ENCODE measurements at regions of chr2 and their contacts with region 1.

Region 1: DNA sequence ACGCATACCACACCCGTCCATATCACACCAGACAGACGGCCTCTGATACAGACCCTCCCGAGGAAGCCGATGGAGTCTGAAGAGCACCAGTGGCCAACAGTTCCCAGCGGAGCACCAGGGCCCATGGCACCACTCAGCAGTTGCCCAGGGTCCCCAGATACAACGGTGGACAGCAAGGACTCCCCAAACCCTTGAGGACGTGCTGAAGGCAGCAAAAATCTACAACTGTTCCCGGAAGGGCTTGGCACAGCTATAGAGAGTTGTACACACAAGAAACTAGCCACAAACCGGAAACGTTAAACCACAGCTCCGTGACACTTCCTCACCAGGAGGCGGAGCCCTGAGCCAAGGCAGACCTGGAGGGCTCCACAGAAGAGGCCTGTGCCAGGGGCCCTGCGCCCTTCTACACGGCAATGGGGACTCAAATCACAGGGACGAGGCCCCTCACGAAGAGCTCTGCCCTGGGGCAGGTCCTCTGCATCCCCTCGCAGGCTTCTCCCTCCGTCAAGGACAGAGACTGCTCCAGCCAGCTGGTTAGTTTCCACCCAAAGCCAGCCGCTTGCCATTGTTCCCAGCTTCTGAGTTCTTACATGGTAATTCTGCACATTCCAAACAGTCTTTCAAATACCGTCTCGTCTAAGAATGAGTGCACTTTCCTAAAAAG is 133.4 kb downstream of the HDAC4 start:
- DNase-seq: peak; percentile 93 to 96 (median 94)
- H3K4me3 ChIP-seq: peak overlapping the region; percentile 64 to 79
- H3K4me3 Mint-ChIP-seq: peak overlapping the region; percentile 95 to 98 (median 97)
- H3K27ac ChIP-seq: peak overlapping the region; percentile 81
- H3K27ac Mint-ChIP-seq: peak overlapping the region; percentile 95 to 100 (median 98)
- H3K4me1 ChIP-seq: peaks cover 75% of the 10 kb centered on the region
- H3K4me1 Mint-ChIP-seq: peaks cover 46 to 87% (median 68%) of the 10 kb centered on the region in 4 donors
- H3K27me3 ChIP-seq: no peaks in the 10 kb centered on the region
- H3K27me3 Mint-ChIP-seq: no peaks in the 10 kb centered on the region

Region 2: DNA sequence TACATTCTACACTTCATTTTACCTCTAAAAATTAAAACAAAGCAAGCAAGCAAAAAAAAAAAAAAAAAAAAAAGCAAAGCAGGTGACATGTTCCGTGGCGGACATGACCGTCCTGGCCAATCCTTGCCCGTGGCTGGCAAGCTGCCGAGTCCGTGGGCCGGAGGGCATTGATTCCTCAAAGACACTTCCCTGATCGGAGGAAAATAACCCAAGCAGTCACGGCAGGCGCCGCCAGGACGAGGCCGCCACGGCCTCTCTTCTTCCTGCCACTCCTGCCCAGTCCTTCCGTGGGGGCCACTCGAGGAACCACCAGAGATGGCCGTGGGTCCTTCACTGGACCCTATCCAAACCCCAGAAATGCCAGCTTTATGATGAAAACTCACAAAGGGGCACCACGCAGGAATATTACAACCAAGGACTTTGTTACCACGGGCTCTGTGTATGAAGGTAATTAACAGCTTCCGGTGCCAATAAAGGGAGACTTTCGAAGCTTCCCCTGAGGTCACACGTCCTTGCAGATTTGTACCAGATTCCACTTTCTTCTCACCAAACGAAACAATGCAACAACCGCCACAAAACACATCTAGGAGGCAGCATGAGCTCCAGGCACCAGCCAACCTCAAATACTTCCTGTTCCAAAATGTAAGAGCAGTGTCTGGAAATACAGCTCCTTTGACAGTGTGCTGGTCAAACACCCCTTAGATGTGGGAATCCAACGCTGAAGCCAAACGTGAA is 36.9 kb before region 1 on chr2:
- CTCF ChIA-PET with region 1: interaction called, 8 read pairs
- POLR2A ChIA-PET with region 1: interaction called, 11 read pairs
- intact Hi-C with region 1: loop called (anchors 2 kb)
- DNase-seq: peak; percentile 24 to 58 (median 44)
- H3K4me3 ChIP-seq: peak overlapping the region in 1 of 2 donors; percentile 3
- H3K4me3 Mint-ChIP-seq: peak overlapping the region; percentile 2 to 82 (median 67)
- H3K27ac ChIP-seq: peak overlapping the region; percentile 60
- H3K27ac Mint-ChIP-seq: peak overlapping the region; percentile 71 to 93 (median 85)
- H3K4me1 ChIP-seq: peaks cover 60% of the 10 kb centered on the region
- H3K4me1 Mint-ChIP-seq: peaks cover 43 to 87% (median 65%) of the 10 kb centered on the region in 4 donors
- H3K27me3 ChIP-seq: no peaks in the 10 kb centered on the region
- H3K27me3 Mint-ChIP-seq: no peaks in the 10 kb centered on the region

Region 3: DNA sequence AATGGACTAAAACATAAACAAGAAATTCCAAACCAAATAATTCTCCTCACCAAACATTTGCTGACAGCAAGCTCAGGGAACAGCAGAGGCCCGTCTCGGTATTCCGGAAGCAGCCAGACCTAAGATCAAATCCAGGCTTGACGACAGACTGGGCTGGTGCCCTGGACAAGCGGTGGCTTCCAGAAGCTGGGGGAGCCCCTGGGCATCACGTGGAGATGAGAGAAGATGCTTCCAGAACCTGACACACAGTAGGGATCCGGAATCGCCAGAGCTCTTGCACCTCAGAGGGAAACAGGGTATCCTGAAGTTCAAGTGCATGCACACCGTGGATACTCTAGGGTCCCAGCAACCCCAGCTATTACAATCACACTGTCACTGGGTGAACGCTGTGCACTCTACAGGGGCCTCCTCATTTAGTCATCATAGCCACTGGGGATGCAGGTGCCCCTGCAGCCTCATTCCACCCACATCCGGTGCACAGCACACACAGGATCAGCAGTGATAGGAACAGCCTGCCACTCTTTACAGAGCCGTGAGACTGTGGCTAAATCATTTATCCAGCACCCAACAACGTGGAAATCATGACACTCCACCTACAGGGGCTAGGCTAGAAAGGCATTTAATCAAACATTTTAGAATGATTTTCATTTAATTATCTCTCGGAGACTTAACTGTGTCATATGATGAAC is 30.8 kb after region 1 on chr2:
- CTCF ChIA-PET with region 1: interaction called, 196 read pairs
- POLR2A ChIA-PET with region 1: interaction called, 109 read pairs
- intact Hi-C with region 1: loop called (anchors 1 kb)
- DNase-seq: peak; percentile 75 to 94 (median 83)
- H3K4me3 ChIP-seq: peak overlapping the region; percentile 56 to 58
- H3K4me3 Mint-ChIP-seq: peak overlapping the region; percentile 86 to 92 (median 90)
- H3K27ac ChIP-seq: peak overlapping the region; percentile 64
- H3K27ac Mint-ChIP-seq: peak overlapping the region; percentile 92 to 98 (median 95)
- H3K4me1 ChIP-seq: peaks cover 61% of the 10 kb centered on the region
- H3K4me1 Mint-ChIP-seq: peaks cover 36 to 79% (median 57%) of the 10 kb centered on the region in 4 donors
- H3K27me3 ChIP-seq: no peaks in the 10 kb centered on the region
- H3K27me3 Mint-ChIP-seq: no peaks in the 10 kb centered on the region

Region 4: DNA sequence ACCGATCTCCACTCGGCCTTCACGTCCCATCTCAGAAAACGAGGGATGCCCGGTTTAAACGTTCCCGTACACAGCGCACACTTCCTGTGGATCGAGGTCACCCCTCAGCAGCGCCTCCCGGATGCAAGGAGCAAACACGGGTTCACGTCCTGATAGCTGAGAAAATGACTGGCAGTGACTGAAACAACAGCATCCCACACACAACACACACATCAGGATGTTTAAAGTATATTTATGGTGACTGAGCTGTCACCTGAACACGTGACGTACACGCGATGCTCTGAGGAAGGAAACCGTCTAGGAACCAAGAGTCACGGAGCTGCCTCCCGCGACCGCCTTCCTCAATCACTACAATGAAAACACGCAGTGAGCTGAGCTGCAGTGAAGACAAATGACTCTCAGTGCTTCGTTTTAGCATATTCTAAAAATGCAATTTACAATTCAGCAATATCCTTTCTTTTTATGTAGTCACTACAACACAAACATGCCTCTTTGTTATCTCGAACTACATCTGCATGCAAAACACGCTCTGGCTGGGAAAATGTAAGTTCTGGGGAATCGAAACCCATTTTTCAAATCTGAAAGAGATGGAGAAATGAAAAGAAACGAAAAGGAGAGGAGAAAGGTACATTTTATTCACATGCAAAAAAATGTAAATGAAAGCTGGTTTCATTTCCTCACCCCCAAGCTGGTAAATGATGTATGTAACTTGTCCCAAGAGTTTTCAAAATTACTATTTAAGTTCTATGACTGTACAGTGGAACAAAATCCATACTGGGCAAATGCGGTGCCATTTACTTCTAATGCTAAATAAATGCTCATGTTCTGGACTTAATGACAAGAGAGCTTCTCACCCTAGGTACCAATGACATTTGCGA is 113.7 kb after region 1 on chr2:
- CTCF ChIA-PET with region 1: interaction called, 20 read pairs
- POLR2A ChIA-PET with region 1: interaction called, 14 read pairs
- intact Hi-C with region 1: loop called (anchors 5 kb)
- DNase-seq: peak; percentile 68 to 87 (median 77)
- H3K4me3 ChIP-seq: peak overlapping the region; percentile 39 to 49
- H3K4me3 Mint-ChIP-seq: peak overlapping the region; percentile 83 to 94 (median 87)
- H3K27ac ChIP-seq: peak overlapping the region; percentile 62
- H3K27ac Mint-ChIP-seq: peak overlapping the region; percentile 90 to 99 (median 96)
- H3K4me1 ChIP-seq: peaks cover 21% of the 10 kb centered on the region
- H3K4me1 Mint-ChIP-seq: peaks cover 17 to 31% (median 19%) of the 10 kb centered on the region in 4 donors
- H3K27me3 ChIP-seq: no peaks in the 10 kb centered on the region
- H3K27me3 Mint-ChIP-seq: no peaks in the 10 kb centered on the region

Region 5: GRCh38 chr2:239482778-239483712 is 215.6 kb after region 1 on chr2:
- CTCF ChIA-PET with region 1: no interaction called
- POLR2A ChIA-PET with region 1: no interaction called
- intact Hi-C with region 1: no loop called
- DNase-seq: no peak
- H3K4me3 ChIP-seq: no peak overlapping the region
- H3K4me3 Mint-ChIP-seq: no peak overlapping the region
- H3K27ac ChIP-seq: no peak overlapping the region
- H3K27ac Mint-ChIP-seq: no peak overlapping the region
- H3K4me1 ChIP-seq: no peaks in the 10 kb centered on the region
- H3K4me1 Mint-ChIP-seq: no peaks in the 10 kb centered on the region
- H3K27me3 ChIP-seq: no peaks in the 10 kb centered on the region
- H3K27me3 Mint-ChIP-seq: peaks cover 0 to 1% of the 10 kb centered on the region in 2 donors

Region 6: GRCh38 chr2:239629926-239630617 is 362.7 kb after region 1 on chr2:
- CTCF ChIA-PET with region 1: no interaction called
- POLR2A ChIA-PET with region 1: interaction called, 3 read pairs
- intact Hi-C with region 1: loop called (anchors 10 kb)
- DNase-seq: no peak
- H3K4me3 ChIP-seq: no peak overlapping the region
- H3K4me3 Mint-ChIP-seq: no peak overlapping the region
- H3K27ac ChIP-seq: no peak overlapping the region
- H3K27ac Mint-ChIP-seq: peak overlapping the region in 5 of 7 donors; percentile 15 to 68 (median 18)
- H3K4me1 ChIP-seq: peaks cover 34% of the 10 kb centered on the region
- H3K4me1 Mint-ChIP-seq: peaks cover 21 to 47% (median 32%) of the 10 kb centered on the region in 4 donors
- H3K27me3 ChIP-seq: no peaks in the 10 kb centered on the region
- H3K27me3 Mint-ChIP-seq: no peaks in the 10 kb centered on the region

Region 7: DNA sequence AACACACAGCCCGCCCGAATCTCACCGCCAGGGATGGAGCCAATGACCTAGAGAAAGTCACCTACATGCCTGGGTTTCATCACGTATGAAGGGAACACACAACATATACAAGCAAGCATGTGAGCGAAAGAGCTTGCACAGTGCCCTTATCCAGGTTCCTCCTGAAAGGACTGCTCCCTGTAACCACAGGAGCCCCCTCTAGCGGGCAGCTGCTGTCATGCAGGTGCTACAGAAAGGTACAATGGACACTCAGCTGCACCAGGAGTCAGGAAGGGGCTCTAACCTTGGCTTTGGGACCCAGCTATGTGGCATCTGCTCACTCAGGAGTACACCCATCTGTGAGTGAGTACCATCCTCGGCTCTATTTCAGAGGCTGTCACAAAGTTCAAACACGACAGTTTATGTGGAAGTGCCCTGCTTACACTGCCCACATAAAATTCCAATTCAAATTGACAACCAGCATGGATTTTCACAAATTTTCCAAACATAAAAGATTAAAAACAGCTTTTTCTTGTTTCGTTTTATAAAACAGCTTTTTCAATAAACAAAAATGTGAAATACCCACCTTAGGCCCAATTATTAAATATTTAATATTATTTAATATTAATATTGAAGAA is 754.2 kb after region 1 on chr2:
- CTCF ChIA-PET with region 1: interaction called, 8 read pairs
- POLR2A ChIA-PET with region 1: interaction called, 4 read pairs
- intact Hi-C with region 1: loop called (anchors 5 kb)
- DNase-seq: peak; percentile 42 to 73 (median 51)
- H3K4me3 ChIP-seq: no peak overlapping the region
- H3K4me3 Mint-ChIP-seq: no peak overlapping the region
- H3K27ac ChIP-seq: no peak overlapping the region
- H3K27ac Mint-ChIP-seq: peak overlapping the region in 2 of 7 donors; percentile 41 to 65
- H3K4me1 ChIP-seq: peaks cover 20% of the 10 kb centered on the region
- H3K4me1 Mint-ChIP-seq: peaks cover 15 to 34% (median 20%) of the 10 kb centered on the region in 4 donors
- H3K27me3 ChIP-seq: no peaks in the 10 kb centered on the region
- H3K27me3 Mint-ChIP-seq: peaks cover 0 to 2% of the 10 kb centered on the region in 2 donors